ENCODE measurements at regions of chr12 and their contacts with region 1.

Region 1: DNA sequence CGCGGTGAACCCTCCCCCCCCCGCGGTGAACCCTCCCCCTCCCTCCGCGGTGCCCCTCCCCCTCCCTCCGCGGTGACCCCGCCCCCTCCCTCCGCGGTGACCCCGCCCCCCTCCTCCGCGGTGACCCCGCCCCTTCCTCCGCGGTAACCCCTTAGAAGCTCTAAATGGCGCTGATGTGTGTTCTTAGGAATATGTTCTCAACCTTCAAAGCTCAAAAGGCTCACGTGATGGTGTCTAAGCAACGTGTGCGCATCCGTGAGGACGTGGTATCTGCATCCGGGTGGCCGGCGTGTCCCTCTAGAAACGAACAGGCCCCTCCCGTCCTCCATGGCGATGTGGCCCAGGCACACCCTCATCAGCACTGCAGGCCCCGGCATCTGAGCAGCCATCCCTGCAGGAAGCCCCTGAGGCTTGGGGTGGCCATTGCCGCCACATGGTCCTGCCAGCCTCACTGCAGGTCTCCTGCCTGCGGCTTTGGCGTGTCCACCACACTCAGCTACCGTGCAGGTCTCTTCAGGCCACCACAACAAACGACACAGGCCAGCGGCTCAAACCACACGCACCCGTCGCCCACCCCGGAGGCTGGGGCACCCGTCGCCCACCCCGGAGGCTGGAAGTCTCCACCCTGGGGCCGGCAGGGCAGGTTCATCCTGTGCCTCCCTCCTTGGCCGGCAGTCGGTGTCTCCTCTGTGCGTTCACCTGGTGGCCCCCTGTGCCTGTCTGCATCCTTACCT is 14.5 kb upstream of the FBRSL1 start:
- DNase-seq: peak in 3 of 4 experiments; percentile 55 to 59 (median 58)
- ATAC-seq: peak; percentile 43
- H3K4me3 ChIP-seq: peak overlapping the region; percentile 30
- H3K27ac ChIP-seq: peak overlapping the region; percentile 72; the same call in 2 of the 3 replicates
- H3K4me1 ChIP-seq: peaks cover 6 to 67% of the 10 kb centered on the region in 2 experiments; a peak in 3 of 5 replicates
- H3K27me3 ChIP-seq: peaks cover 13 to 18% of the 10 kb centered on the region in 2 experiments
- CTCF ChIP-seq: no peak
- EP300 ChIP-seq: no peak
- POLR2A ChIP-seq: no peak
- RAD21 ChIP-seq: no peak

Region 2: GRCh38 chr12:132523576-132524331 is 48.3 kb after region 1 on chr12:
- CTCF ChIA-PET with region 1: no interaction called
- POLR2A ChIA-PET with region 1: no interaction called
- in situ Hi-C with region 1: no loop called
- intact Hi-C with region 1: loop called (anchors 5 kb)
- DNase-seq: peak; percentile 68 to 81 (median 78)
- ATAC-seq: peak; percentile 91
- H3K4me3 ChIP-seq: no peak overlapping the region
- H3K27ac ChIP-seq: no peak overlapping the region
- H3K4me1 ChIP-seq: peaks cover 0 to 67% of the 10 kb centered on the region in 2 experiments; a peak in 2 of 5 replicates
- H3K27me3 ChIP-seq: no peaks in the 10 kb centered on the region
- CTCF ChIP-seq: peak; percentile 79 to 86 (median 81)
- EP300 ChIP-seq: no peak
- POLR2A ChIP-seq: no peak
- RAD21 ChIP-seq: peak; percentile 52 to 75

Measured in K562 (cell line).